ENCODE measurements at regions of chr16 and their contacts with region 1.

Region 1: GRCh38 chr16:21300309-21301167 is 22.4 kb upstream of the CRYM start:
- DNase-seq: peak in 6 of 9 donors; percentile 4 to 59 (median 8)
- ATAC-seq: peak; percentile 77
- H3K4me3 ChIP-seq: peak overlapping the region; percentile 69
- H3K4me3 Mint-ChIP-seq: peak overlapping the region; percentile 88 to 99 (median 94)
- H3K27ac ChIP-seq: no peak overlapping the region
- H3K27ac Mint-ChIP-seq: peak overlapping the region in 3 of 9 donors; percentile 19 to 72 (median 69)
- H3K4me1 ChIP-seq: peaks cover 0 to 10% of the 10 kb centered on the region in 2 donors
- H3K4me1 Mint-ChIP-seq: peaks cover 22 to 29% (median 27%) of the 10 kb centered on the region in 7 donors
- H3K27me3 ChIP-seq: no peaks in the 10 kb centered on the region
- H3K27me3 Mint-ChIP-seq: peaks cover 8 to 57% (median 24%) of the 10 kb centered on the region in 5 donors

Region 2: DNA sequence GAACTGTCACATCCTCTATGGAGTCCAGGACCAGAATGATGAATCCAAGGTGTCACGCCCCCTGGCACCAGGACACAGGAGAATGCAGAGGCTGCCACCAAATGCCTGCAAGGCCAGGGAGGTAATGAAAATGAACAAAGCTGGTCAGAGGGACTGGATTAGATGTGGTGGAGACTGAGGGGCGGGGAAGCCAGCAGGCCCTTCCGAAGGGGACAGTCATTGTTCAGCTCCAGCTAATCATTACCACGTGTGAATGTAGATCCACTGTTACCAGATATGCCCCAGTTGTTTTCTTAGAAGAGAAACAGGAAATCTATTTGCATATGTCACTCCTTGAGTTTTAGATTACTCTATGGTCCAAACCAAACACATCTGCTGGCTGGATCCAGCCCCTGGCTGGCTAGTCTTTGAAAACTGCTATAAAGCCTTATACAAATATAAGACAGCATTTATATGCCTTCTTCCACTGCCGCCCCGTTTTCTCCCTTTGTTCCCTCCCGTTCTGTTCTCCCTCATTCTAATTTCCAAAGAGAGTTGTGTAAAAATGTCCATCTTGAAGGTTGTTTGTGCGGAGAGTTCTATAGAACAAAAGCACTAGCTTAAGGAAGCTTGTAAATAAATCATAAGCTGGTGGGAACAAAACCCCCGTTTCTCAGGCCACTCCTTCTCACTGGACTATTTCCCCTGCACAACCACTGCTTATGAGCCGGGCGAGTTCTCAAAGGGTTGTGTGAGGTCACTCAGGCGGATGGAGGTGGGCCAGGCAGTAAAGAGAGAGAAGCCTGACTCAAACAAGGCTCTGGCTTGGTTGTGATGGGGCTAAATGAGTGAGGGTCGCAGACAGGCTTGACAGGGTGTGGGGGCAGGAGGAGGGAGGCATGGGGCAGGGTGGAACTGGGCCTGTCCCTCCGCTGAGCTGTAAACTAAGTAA is 36.6 kb before region 1 on chr16:
- CTCF ChIA-PET with region 1: no interaction called
- POLR2A ChIA-PET with region 1: no interaction called
- intact Hi-C with region 1: no loop called
- DNase-seq: no peak
- ATAC-seq: no peak
- H3K4me3 ChIP-seq: no peak overlapping the region
- H3K4me3 Mint-ChIP-seq: no peak overlapping the region
- H3K27ac ChIP-seq: no peak overlapping the region
- H3K27ac Mint-ChIP-seq: no peak overlapping the region
- H3K4me1 ChIP-seq: no peaks in the 10 kb centered on the region
- H3K4me1 Mint-ChIP-seq: no peaks in the 10 kb centered on the region
- H3K27me3 ChIP-seq: no peaks in the 10 kb centered on the region
- H3K27me3 Mint-ChIP-seq: peaks cover 0 to 11% (median 4%) of the 10 kb centered on the region in 5 donors

Region 3: DNA sequence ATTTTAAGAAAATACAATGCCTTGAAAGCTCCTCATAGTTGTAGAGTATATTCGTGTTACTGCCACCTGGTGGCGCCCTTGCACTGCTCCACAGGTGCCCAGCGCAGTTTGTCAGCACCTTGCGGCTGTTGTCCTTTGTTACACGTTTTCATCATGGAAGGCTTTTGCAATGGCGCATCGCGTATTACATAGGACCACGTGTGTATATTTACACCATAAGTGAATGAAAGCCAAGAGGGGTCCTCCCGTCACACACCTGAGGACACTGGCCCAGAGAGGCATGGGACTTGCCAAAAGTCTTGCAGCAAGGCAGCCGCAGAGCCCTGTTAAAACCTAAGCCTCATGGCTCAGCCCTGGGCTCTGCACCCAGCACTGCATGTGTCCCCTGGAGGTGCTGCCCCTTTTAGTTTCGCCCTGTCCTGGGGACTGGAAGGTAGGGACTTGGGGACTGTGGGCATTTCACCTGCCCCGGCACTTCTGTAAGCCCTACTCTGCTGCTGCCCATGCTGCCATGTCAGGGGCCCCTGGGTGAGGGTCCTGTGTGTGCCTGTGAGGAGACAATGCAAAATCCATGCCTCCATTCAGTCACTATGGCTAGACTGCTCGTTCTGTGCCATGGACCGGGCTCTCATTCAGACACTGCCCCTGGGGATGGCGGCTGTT is 1020.9 kb after region 1 on chr16:
- CTCF ChIA-PET with region 1: no interaction called
- POLR2A ChIA-PET with region 1: no interaction called
- intact Hi-C with region 1: loop called in 1 of 2 experiments (anchors 10 kb)
- DNase-seq: peak; percentile 53 to 82 (median 73)
- ATAC-seq: peak; percentile 83
- H3K4me3 ChIP-seq: no peak overlapping the region
- H3K4me3 Mint-ChIP-seq: no peak overlapping the region
- H3K27ac ChIP-seq: no peak overlapping the region
- H3K27ac Mint-ChIP-seq: peak overlapping the region in 8 of 9 donors; percentile 67 to 85 (median 81)
- H3K4me1 ChIP-seq: no peaks in the 10 kb centered on the region
- H3K4me1 Mint-ChIP-seq: peaks cover 0 to 15% (median 6%) of the 10 kb centered on the region in 7 donors
- H3K27me3 ChIP-seq: no peaks in the 10 kb centered on the region
- H3K27me3 Mint-ChIP-seq: no peaks in the 10 kb centered on the region

Measured in naive thymus-derived CD4-positive, alpha-beta T cell (primary cell).